Right lobe of liver (tissue), 6 donors: ENCODE measurements at regions of chr11 and their contacts with region 1.

Region 1: DNA sequence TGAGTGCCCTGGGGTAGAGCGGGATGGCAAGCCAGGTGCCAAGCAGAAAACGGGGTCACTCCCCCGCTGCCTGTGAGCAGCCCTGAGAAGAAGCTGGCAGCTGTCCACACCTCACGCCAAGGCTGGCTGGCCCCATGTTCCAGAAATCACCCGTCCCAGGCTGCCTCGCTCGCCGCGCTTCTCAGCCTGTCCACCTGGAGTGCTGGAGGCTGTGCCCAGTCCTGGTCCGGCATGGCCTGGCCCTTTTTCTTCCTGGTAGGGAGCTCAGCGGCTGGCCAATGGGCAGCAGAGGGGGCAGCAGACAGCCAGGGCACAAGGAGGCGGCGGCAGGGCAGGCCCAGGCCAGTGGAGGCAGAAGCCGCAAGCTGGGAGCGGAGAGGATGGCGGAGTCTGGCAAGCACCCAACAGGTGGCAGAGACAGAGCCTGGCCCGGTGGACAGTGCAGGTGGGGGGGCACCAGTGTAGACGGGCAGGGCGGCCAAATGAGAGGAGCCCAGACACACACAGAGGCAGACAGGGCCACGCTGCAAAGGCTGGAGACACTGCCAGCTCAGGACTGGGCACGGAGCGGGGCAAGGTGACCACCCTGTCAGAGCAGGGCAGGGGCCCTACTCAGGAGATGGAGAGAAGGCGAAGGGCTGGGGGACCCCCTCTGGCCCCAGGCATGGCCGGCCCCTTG is 37.2 kb upstream of the TH start:
- DNase-seq: peak; percentile 21 to 56 (median 44)
- ATAC-seq: no peak
- H3K4me3 ChIP-seq: no peak overlapping the region
- H3K27ac ChIP-seq: no peak overlapping the region
- H3K4me1 ChIP-seq: no peaks in the 10 kb centered on the region
- H3K27me3 ChIP-seq: no peaks in the 10 kb centered on the region
- CTCF ChIP-seq: no peak
- POLR2A ChIP-seq: no peak

Region 2: GRCh38 chr11:2399488-2400068 is 190.7 kb after region 1 on chr11:
- intact Hi-C with region 1: no loop called
- DNase-seq: no peak
- ATAC-seq: peak; percentile 0 to 11 (median 2)
- H3K4me3 ChIP-seq: peak overlapping the region; percentile 45 to 100 (median 72)
- H3K27ac ChIP-seq: peak overlapping the region; percentile 94 to 95 (median 94)
- H3K4me1 ChIP-seq: peaks cover 0 to 21% (median 7%) of the 10 kb centered on the region in 4 donors
- H3K27me3 ChIP-seq: no peaks in the 10 kb centered on the region
- CTCF ChIP-seq: no peak
- POLR2A ChIP-seq: no peak

Region 3: DNA sequence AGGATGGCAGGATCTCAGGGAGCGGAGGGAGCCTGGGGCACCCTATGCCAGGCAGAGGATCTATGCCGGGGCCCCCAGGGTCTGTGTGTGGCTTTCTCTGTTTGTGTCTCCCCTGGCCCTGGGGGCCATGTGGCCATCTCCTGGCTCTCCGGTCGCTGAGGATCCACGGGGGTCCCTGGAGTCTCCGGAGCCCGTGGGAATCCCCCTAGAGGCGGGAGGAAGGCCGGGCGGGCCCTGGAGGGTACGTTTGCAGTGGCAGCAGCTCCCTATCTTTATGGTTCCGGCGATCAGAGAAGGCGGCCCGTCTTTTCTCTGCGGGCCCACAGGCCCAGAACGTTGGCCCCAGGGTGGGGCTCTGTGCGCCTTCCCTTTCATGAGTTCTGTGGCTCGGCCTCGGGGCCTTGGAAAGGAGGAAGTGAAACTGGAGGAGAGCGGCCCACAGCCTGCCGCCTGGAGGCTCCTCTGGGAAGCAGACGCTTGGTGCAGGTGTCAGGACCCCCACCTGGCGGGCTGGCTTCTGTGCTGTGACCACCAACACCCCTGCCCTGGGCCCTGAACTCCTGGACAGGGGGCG is 318.1 kb after region 1 on chr11:
- intact Hi-C with region 1: loop called in 1 of 2 experiments (anchors 10 kb)
- DNase-seq: peak; percentile 52 to 61 (median 54)
- ATAC-seq: peak; percentile 27 to 70 (median 40)
- H3K4me3 ChIP-seq: no peak overlapping the region
- H3K27ac ChIP-seq: no peak overlapping the region
- H3K4me1 ChIP-seq: no peaks in the 10 kb centered on the region
- H3K27me3 ChIP-seq: no peaks in the 10 kb centered on the region
- CTCF ChIP-seq: no peak
- POLR2A ChIP-seq: no peak